SK-N-SH (cell line): ENCODE measurements at regions of chr20 and their contacts with region 1.

Region 1: DNA sequence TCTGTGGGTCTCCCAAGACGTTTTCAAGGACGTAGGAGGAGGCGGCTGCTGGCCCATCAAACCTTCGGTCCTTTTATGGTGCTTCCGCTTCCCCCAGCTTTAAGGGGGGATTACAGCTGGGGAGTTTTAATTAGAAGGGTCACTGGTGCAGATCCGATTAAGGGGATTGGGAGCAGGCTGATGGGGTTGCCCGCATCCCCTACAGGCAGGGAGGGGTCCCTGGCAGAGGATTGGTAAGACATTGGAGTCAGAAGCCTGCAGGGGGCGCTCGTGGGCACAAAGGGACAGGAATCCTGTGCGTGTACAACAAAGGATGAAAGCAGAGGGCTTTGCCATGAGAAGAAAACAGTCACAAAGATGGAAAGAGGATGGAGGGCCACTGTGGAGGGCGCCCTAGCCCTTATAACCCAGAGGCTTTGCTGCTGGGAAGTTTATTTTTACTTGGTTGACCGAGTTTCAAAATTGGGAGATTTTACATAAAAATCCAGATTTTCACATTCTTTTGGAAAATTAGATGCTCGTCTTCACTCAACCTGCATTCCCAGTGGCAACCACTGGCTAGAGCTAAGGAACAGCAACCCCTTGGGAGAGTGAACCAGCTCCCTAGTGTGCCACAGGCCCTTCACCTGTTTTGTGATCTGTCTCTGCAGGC is 97.9 kb downstream of the KCNB1 start:
- DNase-seq: peak; percentile 64
- H3K4me3 ChIP-seq: no peak overlapping the region; a peak in 1 of 4 replicates
- H3K27ac ChIP-seq: peak overlapping the region in 1 of 2 experiments; percentile 39; a peak in 1 of 4 replicates
- H3K4me1 ChIP-seq: peaks cover 0 to 63% of the 10 kb centered on the region in 2 experiments; a peak in 2 of 4 replicates
- H3K27me3 ChIP-seq: no peaks in the 10 kb centered on the region
- CTCF ChIP-seq: peak; percentile 83
- EP300 ChIP-seq: no peak
- RAD21 ChIP-seq: peak; percentile 62

Region 2: GRCh38 chr20:49361862-49362660 is 22.5 kb before region 1 on chr20:
- CTCF ChIA-PET with region 1: interaction called, 55 read pairs
- POLR2A ChIA-PET with region 1: interaction called, 5 read pairs
- DNase-seq: no peak
- H3K4me3 ChIP-seq: no peak overlapping the region
- H3K27ac ChIP-seq: no peak overlapping the region
- H3K4me1 ChIP-seq: peaks cover 0 to 14% of the 10 kb centered on the region in 2 experiments; a peak in 2 of 4 replicates
- H3K27me3 ChIP-seq: peaks cover under 1% of the 10 kb centered on the region; the same call in 1 of the 2 replicates
- CTCF ChIP-seq: no peak
- EP300 ChIP-seq: no peak
- RAD21 ChIP-seq: no peak

Region 3: GRCh38 chr20:49372095-49372726 is 12.4 kb before region 1 on chr20:
- CTCF ChIA-PET with region 1: interaction called, 55 read pairs
- POLR2A ChIA-PET with region 1: interaction called, 5 read pairs
- DNase-seq: no peak
- H3K4me3 ChIP-seq: no peak overlapping the region
- H3K27ac ChIP-seq: no peak overlapping the region
- H3K4me1 ChIP-seq: peaks cover 0 to 10% of the 10 kb centered on the region in 2 experiments; a peak in 1 of 4 replicates
- H3K27me3 ChIP-seq: peaks cover 3% of the 10 kb centered on the region; the same call in 1 of the 2 replicates
- CTCF ChIP-seq: no peak
- EP300 ChIP-seq: no peak
- RAD21 ChIP-seq: no peak

Region 4: DNA sequence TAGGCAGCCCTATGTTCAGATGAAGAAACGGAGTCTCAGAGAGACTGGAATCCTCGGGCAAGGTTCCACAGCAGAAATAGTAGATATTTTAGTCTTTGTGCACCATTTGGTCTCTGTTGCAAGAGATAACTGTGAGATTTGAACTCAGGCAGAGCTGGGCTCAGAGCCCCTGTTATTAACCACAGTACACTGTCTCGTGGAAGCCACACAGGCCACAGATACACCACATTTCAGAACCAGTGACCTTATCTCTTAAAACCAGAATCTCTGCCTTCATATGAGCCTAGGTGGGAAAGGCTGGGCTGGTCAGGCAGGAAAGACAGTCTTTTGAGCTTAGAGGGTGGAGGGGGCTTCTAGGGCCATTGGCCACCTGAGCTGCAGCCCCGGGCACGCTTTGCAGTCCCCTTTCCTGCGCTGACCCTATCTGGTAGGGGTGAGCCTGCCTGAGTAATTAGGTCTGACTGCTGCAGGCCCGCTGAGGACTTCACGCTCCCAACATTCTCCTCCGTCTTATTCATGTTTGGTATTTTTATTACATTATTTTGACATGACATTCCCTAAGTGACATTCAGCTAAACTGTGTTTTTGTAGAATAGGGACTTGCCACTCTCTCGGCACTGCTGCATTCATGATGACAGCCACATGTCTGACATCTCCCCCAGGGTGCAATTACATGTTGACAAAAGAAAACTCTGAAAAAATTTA is 26.8 kb after region 1 on chr20:
- CTCF ChIA-PET with region 1: interaction called, 17 read pairs
- POLR2A ChIA-PET with region 1: no interaction called
- DNase-seq: no peak
- H3K4me3 ChIP-seq: no peak overlapping the region
- H3K27ac ChIP-seq: no peak overlapping the region
- H3K4me1 ChIP-seq: peaks cover 0 to 23% of the 10 kb centered on the region in 2 experiments; a peak in 1 of 4 replicates
- H3K27me3 ChIP-seq: peaks cover 5% of the 10 kb centered on the region; the same call in 1 of the 2 replicates
- CTCF ChIP-seq: no peak
- EP300 ChIP-seq: no peak
- RAD21 ChIP-seq: no peak

Region 5: DNA sequence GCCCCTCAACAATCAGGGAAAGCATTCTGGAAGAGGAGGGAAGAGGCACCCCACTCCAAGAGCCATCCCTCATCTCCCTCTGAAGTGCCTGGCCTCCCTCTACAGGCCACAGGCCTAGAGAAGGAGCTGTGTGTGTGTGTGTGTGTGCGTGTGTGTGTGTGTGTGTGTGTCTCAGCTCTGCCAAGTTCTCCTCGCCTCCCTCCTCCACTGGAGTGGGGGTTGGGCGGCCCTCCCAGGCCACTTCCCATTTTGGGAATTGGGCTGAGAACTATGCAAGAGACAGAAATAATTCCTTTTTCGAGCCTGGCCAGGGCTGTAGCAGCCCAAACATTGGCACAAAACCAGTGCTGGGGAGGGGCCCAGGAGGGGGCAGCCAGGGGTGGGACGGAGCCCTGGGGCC is 62.2 kb after region 1 on chr20:
- CTCF ChIA-PET with region 1: interaction called, 12 read pairs
- POLR2A ChIA-PET with region 1: no interaction called
- DNase-seq: no peak
- H3K4me3 ChIP-seq: no peak overlapping the region
- H3K27ac ChIP-seq: no peak overlapping the region
- H3K4me1 ChIP-seq: peaks cover 0 to 37% of the 10 kb centered on the region in 2 experiments; a peak in 2 of 4 replicates
- H3K27me3 ChIP-seq: no peaks in the 10 kb centered on the region
- CTCF ChIP-seq: no peak
- EP300 ChIP-seq: no peak
- RAD21 ChIP-seq: no peak

Region 6: GRCh38 chr20:49508435-49509199 is 124.1 kb after region 1 on chr20:
- CTCF ChIA-PET with region 1: interaction called, 43 read pairs
- POLR2A ChIA-PET with region 1: no interaction called
- DNase-seq: peak; percentile 74
- H3K4me3 ChIP-seq: no peak overlapping the region
- H3K27ac ChIP-seq: no peak overlapping the region
- H3K4me1 ChIP-seq: peaks cover 10 to 15% of the 10 kb centered on the region in 2 experiments; a peak in 2 of 4 replicates
- H3K27me3 ChIP-seq: no peaks in the 10 kb centered on the region
- CTCF ChIP-seq: peak; percentile 69
- EP300 ChIP-seq: no peak
- RAD21 ChIP-seq: peak; percentile 74